ENCODE measurements at regions of chr1 and their contacts with region 1.

Region 1: DNA sequence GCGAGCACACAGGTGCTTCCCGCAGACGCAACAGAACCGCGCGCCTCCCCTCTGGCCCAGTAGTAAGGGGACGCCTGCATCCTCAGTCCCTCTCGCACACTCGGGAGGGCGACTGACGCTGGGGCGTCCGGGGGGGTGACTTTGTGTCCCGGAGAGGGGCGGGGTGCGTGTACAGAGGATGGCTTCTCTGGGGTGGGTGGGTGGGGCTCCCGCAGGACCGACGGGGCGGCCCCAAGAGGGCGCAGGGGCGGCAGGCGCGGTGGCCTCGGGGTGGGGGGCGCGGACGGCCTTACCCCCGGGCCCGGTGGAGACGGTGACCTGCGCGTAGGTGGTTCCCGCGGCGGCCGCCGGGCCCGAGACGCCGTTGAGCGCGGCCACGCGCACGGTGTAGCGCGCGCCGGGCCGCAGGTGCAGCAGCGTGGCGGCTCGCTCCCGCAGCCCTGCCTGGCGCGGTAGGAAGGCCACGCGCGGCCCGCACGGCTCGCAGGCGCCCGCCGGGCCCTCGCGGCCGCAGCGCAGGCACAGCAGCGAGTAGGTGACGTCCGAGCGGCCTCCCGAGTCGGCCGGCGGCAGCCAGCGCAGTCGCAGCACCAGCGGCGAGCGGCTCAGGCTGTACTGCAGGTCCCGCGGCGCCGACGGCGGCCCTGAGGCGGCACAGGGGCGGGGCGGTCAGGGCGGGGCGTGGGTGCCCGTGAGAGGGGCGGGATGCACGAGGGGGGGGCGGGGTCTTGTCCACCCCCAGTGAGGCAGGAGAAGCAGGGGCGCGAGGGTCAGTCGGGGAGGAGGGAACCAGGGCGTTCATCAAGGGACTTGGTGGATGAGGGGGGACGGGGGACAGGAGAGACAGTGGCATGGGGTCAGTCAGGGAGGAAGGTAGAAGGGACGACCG is 12.1 kb downstream of the EPHA10 start:
- DNase-seq: peak; percentile 41 to 55
- H3K4me3 ChIP-seq: peak overlapping the region; percentile 32
- H3K4me3 Mint-ChIP-seq: peak overlapping the region; percentile 70
- H3K27ac Mint-ChIP-seq: no peak overlapping the region
- H3K4me1 ChIP-seq: no peaks in the 10 kb centered on the region
- H3K4me1 Mint-ChIP-seq: no peaks in the 10 kb centered on the region
- H3K27me3 ChIP-seq: no peaks in the 10 kb centered on the region
- H3K27me3 Mint-ChIP-seq: peaks cover 3% of the 10 kb centered on the region
- CTCF ChIP-seq: no peak

Region 2: GRCh38 chr1:37692078-37692833 is 60.6 kb before region 1 on chr1 and contains the start of gene CDCA8:
- CTCF ChIA-PET with region 1: interaction called, 3 read pairs
- POLR2A ChIA-PET with region 1: no interaction called
- intact Hi-C with region 1: loop called (anchors 5 kb)
- DNase-seq: peak; percentile 96
- H3K4me3 ChIP-seq: peak within 1 kb of the TSS; percentile 91
- H3K4me3 Mint-ChIP-seq: peak within 1 kb of the TSS; percentile 93
- H3K27ac Mint-ChIP-seq: peak within 1 kb of the TSS; percentile 79
- H3K4me1 ChIP-seq: no peaks in the 10 kb centered on the region
- H3K4me1 Mint-ChIP-seq: no peaks in the 10 kb centered on the region
- H3K27me3 ChIP-seq: no peaks in the 10 kb centered on the region
- H3K27me3 Mint-ChIP-seq: no peaks in the 10 kb centered on the region
- CTCF ChIP-seq: peak; percentile 23 to 66
- total RNA-seq, gene CDCA8: 35.4 and 37.0 TPM in 2 replicates